ENCODE measurements at regions of chr1 and their contacts with region 1.

Region 1: DNA sequence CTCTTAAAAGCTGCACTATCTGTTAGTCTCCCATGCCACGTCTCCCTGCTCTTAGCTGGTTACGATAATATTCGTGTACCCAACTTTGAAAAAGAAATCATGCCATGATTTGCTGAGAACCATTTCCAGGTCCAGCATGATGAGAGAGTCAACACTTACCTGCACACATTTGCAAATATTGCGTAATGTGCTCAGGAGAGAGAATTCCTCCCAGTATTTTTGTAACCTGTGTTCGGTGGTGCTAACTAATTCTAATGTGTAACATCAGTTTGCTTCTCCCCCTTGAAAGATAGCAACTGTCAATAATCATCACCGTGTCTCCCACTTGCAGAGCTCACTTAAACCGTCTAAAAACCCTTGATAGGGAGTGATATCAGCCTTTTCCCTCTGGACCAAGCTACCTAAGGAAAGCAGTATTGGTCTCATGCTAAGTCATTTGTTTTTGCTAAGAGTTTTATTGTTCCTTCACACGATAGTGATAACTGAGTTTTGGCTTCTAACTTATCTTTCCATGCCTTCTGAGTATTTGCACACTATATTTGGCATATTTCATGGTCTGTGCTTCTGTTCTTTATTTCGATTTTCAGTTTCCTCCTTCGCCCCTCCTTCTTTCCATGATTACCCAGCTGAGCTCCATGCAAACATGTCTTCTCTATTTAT is 61.1 kb upstream of the IRF2BP2 start:
- DNase-seq: no peak
- H3K4me3 ChIP-seq: no peak overlapping the region
- H3K27ac ChIP-seq: no peak overlapping the region
- H3K4me1 ChIP-seq: peaks cover 0 to 11% (median 3%) of the 10 kb centered on the region in 4 donors
- H3K27me3 ChIP-seq: no peaks in the 10 kb centered on the region
- CTCF ChIP-seq: no peak
- EP300 ChIP-seq: no peak
- POLR2A ChIP-seq: no peak

Region 2: DNA sequence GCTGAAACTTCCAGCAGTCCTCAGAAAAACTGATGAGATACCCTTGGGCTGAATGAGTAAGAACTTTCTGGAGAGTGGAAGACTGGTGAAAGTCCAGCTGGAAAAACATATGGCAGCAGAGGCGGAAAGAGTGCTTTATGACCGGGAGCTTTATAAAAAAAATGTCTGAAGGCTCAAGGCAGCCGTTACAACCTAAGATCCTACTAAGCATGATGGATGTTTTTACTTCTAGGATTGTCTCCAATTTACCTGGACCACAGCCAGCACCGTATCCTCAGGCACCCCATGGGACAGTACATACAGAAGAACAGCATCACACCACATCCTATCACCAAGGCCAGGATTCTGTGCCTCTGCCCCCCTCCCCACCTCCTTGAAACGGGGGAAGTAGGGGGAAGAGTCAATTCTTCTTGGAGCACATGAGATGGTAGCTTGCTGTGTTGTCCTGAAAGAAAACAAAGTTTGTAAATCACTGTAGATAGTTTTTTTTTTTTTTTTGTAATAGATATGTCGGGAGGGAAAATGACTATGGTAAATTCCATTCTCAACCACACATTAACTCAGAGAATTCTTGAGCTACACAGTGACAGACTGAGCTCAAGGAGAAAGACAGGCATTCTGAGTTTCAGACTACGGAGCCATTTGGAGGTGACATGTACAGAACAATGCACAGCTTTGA is 49.3 kb before region 1 on chr1:
- intact Hi-C with region 1: loop called (anchors 5 kb)
- DNase-seq: no peak
- H3K4me3 ChIP-seq: no peak overlapping the region
- H3K27ac ChIP-seq: peak overlapping the region in 1 of 4 donors; percentile 30
- H3K4me1 ChIP-seq: peaks cover 0 to 25% (median 8%) of the 10 kb centered on the region in 4 donors
- H3K27me3 ChIP-seq: no peaks in the 10 kb centered on the region
- CTCF ChIP-seq: no peak
- EP300 ChIP-seq: no peak
- POLR2A ChIP-seq: no peak

Measured in sigmoid colon (tissue), 7 donors.